ENCODE measurements at regions of chr18 and their contacts with region 1.

Region 1: GRCh38 chr18:36392164-36392978 is 94.9 kb downstream of the FHOD3 start:
- DNase-seq: no peak

Region 2: DNA sequence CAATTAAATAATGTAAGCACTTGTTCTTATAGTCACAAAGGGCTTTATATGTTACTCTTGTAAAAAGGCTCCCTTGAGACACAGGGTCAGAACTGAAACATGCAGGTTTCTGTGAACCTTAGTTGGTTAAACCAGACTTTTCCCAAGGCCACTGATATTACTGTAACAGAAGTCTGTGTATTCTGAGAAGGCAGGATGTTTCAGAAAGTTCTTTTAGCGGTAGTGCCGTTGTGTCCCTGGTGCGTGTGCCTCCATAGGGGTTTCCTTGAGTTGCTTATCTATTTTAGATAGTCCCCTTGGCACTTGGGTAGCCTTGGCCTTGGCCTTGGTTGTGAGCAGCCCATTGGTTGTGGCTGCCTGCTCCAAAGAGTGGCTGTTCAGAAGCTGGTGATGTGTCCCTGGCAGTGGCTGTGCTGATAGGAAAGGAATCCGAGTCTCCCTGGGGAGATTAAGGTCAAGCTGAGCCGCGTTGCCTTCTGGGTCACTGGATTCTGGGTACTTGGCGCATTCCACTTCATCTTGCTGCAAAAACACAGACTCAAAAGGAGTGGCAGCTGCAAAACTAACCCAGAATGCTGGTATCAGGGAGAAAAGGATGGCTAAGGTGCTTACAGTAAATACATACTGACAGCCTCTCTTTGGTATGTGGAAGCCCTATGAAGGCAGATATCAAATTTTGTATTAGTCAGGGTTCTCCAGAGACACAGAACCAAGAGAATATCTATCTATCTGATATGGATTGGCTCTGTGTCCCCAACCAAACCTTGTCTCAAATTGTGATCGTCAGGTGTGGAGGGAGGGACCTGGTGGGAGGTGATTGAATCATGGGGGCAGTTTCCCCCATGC is 25.2 kb before region 1 on chr18:
- intact Hi-C with region 1: loop called (anchors 2 kb)
- DNase-seq: peak; percentile 89